Psoas muscle (tissue), 8 donors: ENCODE measurements at regions of chr5 and their contacts with region 1.

Region 1: DNA sequence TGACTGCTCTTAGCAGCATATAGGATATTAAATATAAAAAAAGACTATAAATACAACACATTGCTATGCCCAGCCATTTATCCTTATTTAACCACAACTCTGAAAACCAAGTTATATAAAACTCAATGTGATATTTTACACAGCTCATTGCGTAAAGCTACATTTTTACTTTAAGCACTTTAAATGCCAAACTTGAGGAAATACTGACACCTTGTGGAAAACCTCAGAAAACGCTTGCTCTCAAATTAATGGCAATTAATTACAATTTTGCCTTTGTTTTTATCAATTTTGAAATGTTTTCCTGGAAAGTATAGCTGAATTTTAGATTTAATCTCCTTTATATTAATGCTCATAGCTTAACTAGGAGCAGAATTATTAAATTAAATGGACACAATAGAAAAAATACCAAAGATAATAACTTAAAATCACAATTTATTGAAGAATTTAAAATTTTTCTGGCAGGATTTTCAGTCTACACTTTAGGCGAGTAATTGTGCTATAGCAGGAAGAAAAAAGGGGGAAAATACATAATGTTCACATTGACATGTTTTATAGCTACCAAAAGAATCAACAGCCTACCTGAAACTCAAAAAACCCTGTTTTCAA is 25.2 kb upstream of the PLAC8L1 start:
- DNase-seq: no peak
- ATAC-seq: no peak
- H3K4me3 ChIP-seq: no peak overlapping the region
- H3K27ac ChIP-seq: no peak overlapping the region
- H3K4me1 ChIP-seq: no peaks in the 10 kb centered on the region
- H3K27me3 ChIP-seq: no peaks in the 10 kb centered on the region
- CTCF ChIP-seq: peak; percentile 54

Region 2: GRCh38 chr5:145946112-145946861 is 184.3 kb before region 1 on chr5:
- intact Hi-C with region 1: no loop called
- DNase-seq: peak; percentile 21 to 84
- ATAC-seq: peak; percentile 87 to 94 (median 92)
- H3K4me3 ChIP-seq: peak overlapping the region; percentile 8
- H3K27ac ChIP-seq: peak overlapping the region; percentile 85
- H3K4me1 ChIP-seq: peaks cover 43% of the 10 kb centered on the region
- H3K27me3 ChIP-seq: no peaks in the 10 kb centered on the region
- CTCF ChIP-seq: no peak

Region 3: GRCh38 chr5:146451411-146452073 is 321.0 kb after region 1 on chr5:
- intact Hi-C with region 1: loop called in 1 of 2 experiments (anchors 10 kb)
- DNase-seq: no peak
- ATAC-seq: no peak
- H3K4me3 ChIP-seq: no peak overlapping the region
- H3K27ac ChIP-seq: no peak overlapping the region
- H3K4me1 ChIP-seq: peaks cover 37% of the 10 kb centered on the region
- H3K27me3 ChIP-seq: no peaks in the 10 kb centered on the region
- CTCF ChIP-seq: no peak